Activated CD4-positive, alpha-beta T cell treated with anti-CD3 and anti-CD28 coated beads, Interleukin-2, amount 10 ng/mL, durations not matched to agents 24 days and 14 days (primary cell): ENCODE measurements at regions of chr6 and their contacts with region 1.

Region 1: DNA sequence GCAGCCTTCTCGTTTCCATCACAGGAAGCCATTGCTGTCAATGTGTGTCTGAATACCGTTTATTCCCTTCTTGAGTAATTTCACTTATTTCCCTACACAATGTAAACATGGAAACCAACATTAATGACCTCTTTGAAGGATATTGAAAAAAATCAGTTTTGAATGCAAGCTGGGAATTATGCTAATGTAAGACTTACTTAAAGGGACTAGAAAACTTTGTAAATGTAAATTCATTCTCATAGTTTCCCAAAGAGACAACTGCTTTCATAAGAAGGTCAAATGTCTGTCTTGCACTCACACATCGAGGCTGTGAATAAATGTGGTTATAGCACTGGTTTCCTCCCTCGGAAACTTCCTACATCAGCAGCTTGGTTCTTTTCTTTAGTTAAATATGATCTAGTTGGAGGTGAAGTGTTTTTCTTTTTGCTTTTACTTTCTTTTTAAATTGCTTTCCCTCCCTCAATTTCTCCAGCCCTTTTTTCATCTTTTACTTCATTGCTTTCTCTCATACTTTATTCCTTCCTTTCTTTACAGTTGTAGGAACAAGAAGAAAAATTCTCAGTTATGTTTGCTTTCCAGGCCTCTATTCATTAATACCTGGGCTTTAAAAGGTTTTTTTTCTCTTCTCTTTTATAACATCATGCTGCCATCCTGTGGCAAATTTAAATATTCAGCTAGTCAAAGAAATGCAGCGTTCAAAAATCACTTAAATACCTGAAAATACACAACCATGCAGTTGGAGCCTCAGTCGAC is 108.3 kb downstream of the TNFAIP3 start:
- DNase-seq: peak; percentile 82
- H3K4me3 Mint-ChIP-seq: peak overlapping the region; percentile 77
- H3K27ac Mint-ChIP-seq: peak overlapping the region; percentile 92
- H3K4me1 Mint-ChIP-seq: peaks cover 55% of the 10 kb centered on the region
- H3K27me3 Mint-ChIP-seq: no peaks in the 10 kb centered on the region

Region 2: GRCh38 chr6:137657351-137658011 is 317.9 kb before region 1 on chr6:
- intact Hi-C with region 1: loop called (anchors 2 kb)
- DNase-seq: peak; percentile 79
- H3K4me3 Mint-ChIP-seq: peak overlapping the region; percentile 4
- H3K27ac Mint-ChIP-seq: peak overlapping the region; percentile 45
- H3K4me1 Mint-ChIP-seq: peaks cover 29% of the 10 kb centered on the region
- H3K27me3 Mint-ChIP-seq: no peaks in the 10 kb centered on the region

Region 3: DNA sequence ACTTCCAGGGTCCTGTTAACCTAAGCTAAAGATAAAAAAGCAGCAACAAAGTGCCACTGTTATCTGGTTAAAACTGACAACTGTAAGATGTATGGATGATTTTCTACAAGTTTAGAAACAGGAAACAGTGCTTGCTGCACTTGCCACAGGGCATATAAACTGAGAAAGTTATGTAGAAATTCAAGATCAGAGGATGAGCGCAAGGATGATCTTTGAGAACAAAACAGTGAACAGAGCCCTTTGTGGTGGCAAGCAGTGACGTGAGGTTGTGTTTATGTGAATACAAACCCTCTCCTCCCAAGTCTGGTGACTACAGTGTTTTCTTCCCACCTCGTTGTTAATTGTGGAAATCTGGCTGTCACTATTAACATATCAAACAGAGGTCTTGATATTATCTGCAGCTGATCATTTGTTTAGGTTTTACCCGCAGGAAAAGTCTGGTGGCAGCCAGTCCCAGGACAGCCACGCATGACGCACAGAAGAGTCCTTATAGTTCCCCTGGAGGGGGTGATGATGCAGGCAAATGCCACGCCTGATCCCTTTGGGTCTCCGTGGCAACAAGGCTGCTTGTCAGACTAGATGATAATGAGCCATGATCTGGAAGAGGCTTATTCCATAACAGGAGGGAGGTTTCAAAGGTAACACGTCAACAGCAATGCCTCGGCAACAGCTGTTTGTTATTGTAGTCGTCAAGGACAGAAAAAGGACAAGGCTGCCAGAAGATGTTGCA is 151.4 kb before region 1 on chr6:
- intact Hi-C with region 1: loop called (anchors 1 kb)
- DNase-seq: peak; percentile 94
- H3K4me3 Mint-ChIP-seq: peak overlapping the region; percentile 76
- H3K27ac Mint-ChIP-seq: peak overlapping the region; percentile 98
- H3K4me1 Mint-ChIP-seq: peaks cover 71% of the 10 kb centered on the region
- H3K27me3 Mint-ChIP-seq: no peaks in the 10 kb centered on the region

Region 4: GRCh38 chr6:137903933-137904821 is 71.2 kb before region 1 on chr6:
- intact Hi-C with region 1: loop called (anchors 1 kb)
- DNase-seq: peak; percentile 81
- H3K4me3 Mint-ChIP-seq: peak overlapping the region; percentile 75
- H3K27ac Mint-ChIP-seq: peak overlapping the region; percentile 99
- H3K4me1 Mint-ChIP-seq: peaks cover 50% of the 10 kb centered on the region
- H3K27me3 Mint-ChIP-seq: no peaks in the 10 kb centered on the region

Region 5: GRCh38 chr6:137944793-137945498 is 30.4 kb before region 1 on chr6:
- intact Hi-C with region 1: loop called (anchors 1 kb)
- DNase-seq: peak; percentile 77
- H3K4me3 Mint-ChIP-seq: peak overlapping the region; percentile 23
- H3K27ac Mint-ChIP-seq: peak overlapping the region; percentile 81
- H3K4me1 Mint-ChIP-seq: peaks cover 57% of the 10 kb centered on the region
- H3K27me3 Mint-ChIP-seq: no peaks in the 10 kb centered on the region

Region 6: GRCh38 chr6:138410972-138411667 is 435.8 kb after region 1 on chr6:
- intact Hi-C with region 1: no loop called
- DNase-seq: peak; percentile 69
- H3K4me3 Mint-ChIP-seq: peak overlapping the region; percentile 44
- H3K27ac Mint-ChIP-seq: peak overlapping the region; percentile 85
- H3K4me1 Mint-ChIP-seq: peaks cover 22% of the 10 kb centered on the region
- H3K27me3 Mint-ChIP-seq: no peaks in the 10 kb centered on the region